HepG2 (cell line): ENCODE measurements at regions of chr5 and their contacts with region 1.

Region 1: DNA sequence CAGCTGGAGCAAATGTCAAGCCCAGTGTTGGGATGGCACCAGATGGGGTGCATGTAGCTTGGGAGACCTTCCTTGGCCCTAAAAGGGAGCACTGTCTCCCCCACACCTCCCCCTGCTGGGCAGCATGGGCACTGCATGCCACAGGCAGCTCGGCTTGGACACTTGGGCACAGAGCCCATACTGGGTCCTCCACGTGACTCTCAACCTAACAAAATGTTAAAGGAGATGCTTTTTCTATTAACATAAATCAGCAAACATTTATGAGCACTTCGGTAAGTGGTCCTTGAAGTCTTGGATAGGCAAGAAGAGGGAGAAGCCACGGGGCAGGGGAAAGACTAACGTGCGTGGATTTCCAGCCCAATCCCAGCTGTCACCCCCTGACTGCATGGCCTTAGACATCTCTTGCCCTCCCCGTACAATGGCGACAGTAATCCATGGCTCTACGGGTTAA is 23.9 kb upstream of the MAPK9 start:
- DNase-seq: peak; percentile 38
- ATAC-seq: peak; percentile 73
- H3K4me3 ChIP-seq: no peak overlapping the region
- H3K27ac ChIP-seq: no peak overlapping the region
- H3K4me1 ChIP-seq: no peaks in the 10 kb centered on the region
- H3K27me3 ChIP-seq: peaks cover 0 to 5% of the 10 kb centered on the region in 2 experiments; a peak in 2 of 5 replicates
- CTCF ChIP-seq: peak; percentile 94
- EP300 ChIP-seq: no peak
- POLR2A ChIP-seq: no peak
- RAD21 ChIP-seq: peak; percentile 72

Region 2: GRCh38 chr5:180161420-180162303 is 154.1 kb before region 1 on chr5:
- CTCF ChIA-PET with region 1: no interaction called
- POLR2A ChIA-PET with region 1: no interaction called
- in situ Hi-C with region 1: no loop called
- intact Hi-C with region 1: loop called (anchors 5 kb)
- DNase-seq: peak; percentile 31
- ATAC-seq: peak; percentile 95
- H3K4me3 ChIP-seq: no peak overlapping the region
- H3K27ac ChIP-seq: no peak overlapping the region
- H3K4me1 ChIP-seq: no peaks in the 10 kb centered on the region
- H3K27me3 ChIP-seq: peaks cover 5 to 44% of the 10 kb centered on the region in 2 experiments; a peak in 4 of 5 replicates
- CTCF ChIP-seq: peak; percentile 65
- EP300 ChIP-seq: no peak
- POLR2A ChIP-seq: no peak
- RAD21 ChIP-seq: peak; percentile 69

Region 3: DNA sequence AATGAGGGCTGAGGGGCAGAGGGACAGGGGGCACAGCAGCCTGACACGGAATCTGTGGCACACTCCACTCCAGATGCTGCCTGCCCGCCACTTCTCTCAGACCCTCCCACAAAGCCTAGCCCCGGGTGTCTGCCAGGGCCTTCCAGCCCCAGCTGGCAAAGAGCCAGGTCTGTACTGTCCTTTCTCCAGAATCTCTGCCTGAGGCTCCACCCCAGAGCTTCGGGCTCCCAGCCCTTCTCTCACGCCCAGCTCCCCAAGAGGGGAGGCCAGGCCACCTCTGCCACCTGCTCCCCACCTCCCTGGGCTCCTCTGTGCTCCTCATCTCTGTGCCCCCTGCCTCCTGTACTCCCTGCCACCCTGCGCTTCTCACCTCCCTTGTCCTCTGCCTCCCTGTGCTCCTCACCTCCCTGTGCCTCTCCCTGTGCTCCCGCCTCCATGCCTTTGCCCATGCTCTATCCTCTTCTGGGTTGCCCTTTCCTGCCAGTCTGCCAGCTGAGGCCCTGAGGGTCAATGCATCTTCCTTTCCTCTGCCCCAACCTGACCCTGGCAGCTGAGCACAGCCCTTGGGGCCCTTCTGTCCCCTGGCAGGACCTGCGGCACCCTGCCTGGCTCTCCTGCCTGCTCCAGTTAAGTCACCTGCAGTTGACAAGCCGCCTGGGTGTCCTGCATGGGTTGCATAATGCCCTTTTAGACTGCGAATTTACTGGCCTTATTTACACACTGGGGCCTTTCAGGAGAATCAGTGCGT is 143.2 kb before region 1 on chr5:
- CTCF ChIA-PET with region 1: no interaction called
- POLR2A ChIA-PET with region 1: no interaction called
- in situ Hi-C with region 1: no loop called
- intact Hi-C with region 1: no loop called
- DNase-seq: peak; percentile 73
- ATAC-seq: peak; percentile 59
- H3K4me3 ChIP-seq: no peak overlapping the region; a peak in 1 of 6 replicates
- H3K27ac ChIP-seq: no peak overlapping the region
- H3K4me1 ChIP-seq: peaks cover 30% of the 10 kb centered on the region
- H3K27me3 ChIP-seq: peaks cover 0 to 30% of the 10 kb centered on the region in 2 experiments; a peak in 4 of 5 replicates
- CTCF ChIP-seq: no peak
- EP300 ChIP-seq: no peak
- POLR2A ChIP-seq: no peak
- RAD21 ChIP-seq: no peak